Ovary (tissue), 10 donors: ENCODE measurements at regions of chr1 and their contacts with region 1.

Region 1: GRCh38 chr1:162696286-162696862 is 64.1 kb downstream of the DDR2 start:
- DNase-seq: peak; percentile 87 to 92 (median 89)
- H3K4me3 ChIP-seq: no peak overlapping the region
- H3K27ac ChIP-seq: peak overlapping the region; percentile 67 to 87
- H3K4me1 ChIP-seq: peaks cover 36% of the 10 kb centered on the region
- H3K27me3 ChIP-seq: no peaks in the 10 kb centered on the region
- CTCF ChIP-seq: no peak
- EP300 ChIP-seq: peak; percentile 49
- POLR2A ChIP-seq: peak; percentile 18

Region 2: DNA sequence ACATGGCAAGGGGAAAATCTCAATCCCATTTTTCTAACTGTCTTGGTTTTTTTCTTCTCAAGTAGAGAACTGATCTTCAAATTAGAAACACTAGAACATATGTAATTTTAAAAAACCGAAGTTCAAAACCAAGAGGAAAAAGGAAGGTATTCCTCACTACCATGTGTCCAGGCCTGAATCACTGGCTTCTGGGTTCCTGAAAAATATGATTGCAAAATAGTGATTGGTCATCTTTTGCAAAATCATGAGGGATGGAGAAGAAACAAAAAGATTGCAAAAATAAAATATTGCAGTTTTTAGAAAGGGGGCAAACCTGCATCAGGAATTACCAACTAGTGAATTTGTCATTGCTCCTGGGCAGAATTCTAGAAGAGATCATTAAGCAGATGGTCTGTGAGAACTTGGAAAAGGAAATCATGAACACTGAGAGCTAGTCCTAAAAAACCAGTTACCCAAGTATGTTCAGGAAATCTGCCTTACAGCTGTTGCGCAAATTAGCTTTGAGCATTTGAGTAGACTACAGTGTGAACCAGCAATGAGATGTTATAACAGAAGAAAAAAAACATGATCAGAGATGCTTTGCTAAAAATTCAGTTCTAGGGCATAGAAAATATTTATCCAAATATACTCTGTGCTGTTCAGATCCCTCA is 369.1 kb before region 1 on chr1:
- intact Hi-C with region 1: no loop called
- DNase-seq: no peak
- H3K4me3 ChIP-seq: no peak overlapping the region
- H3K27ac ChIP-seq: no peak overlapping the region
- H3K4me1 ChIP-seq: no peaks in the 10 kb centered on the region
- H3K27me3 ChIP-seq: no peaks in the 10 kb centered on the region
- CTCF ChIP-seq: no peak
- EP300 ChIP-seq: no peak
- POLR2A ChIP-seq: no peak

Region 3: DNA sequence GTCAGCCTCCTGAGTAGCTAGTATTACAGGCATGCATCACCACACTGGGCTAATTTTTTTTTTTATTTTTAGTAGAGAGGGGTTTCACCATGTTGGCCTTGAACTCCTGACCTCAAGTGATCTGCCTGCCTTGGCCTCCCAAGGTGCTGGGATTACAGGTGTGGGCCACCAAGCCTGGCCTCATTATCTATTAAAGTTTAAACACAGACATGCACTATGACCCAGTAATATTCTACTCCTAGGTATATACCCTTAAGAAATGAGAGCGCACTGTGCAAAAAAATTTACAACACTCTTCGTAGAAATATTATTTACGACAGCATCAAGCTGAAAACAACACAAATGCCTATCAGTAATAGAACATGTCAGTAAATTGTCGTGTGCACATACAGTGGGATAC is 265.8 kb before region 1 on chr1:
- intact Hi-C with region 1: no loop called
- DNase-seq: no peak
- H3K4me3 ChIP-seq: no peak overlapping the region
- H3K27ac ChIP-seq: no peak overlapping the region
- H3K4me1 ChIP-seq: no peaks in the 10 kb centered on the region
- H3K27me3 ChIP-seq: no peaks in the 10 kb centered on the region
- CTCF ChIP-seq: no peak
- EP300 ChIP-seq: no peak
- POLR2A ChIP-seq: no peak

Region 4: GRCh38 chr1:162633081-162633762 is 63.2 kb before region 1 on chr1:
- intact Hi-C with region 1: loop called in 1 of 4 experiments (anchors 10 kb)
- DNase-seq: peak in 4 of 5 donors; percentile 39 to 55 (median 44)
- H3K4me3 ChIP-seq: peak overlapping the region; percentile 44
- H3K27ac ChIP-seq: peak overlapping the region; percentile 76 to 92
- H3K4me1 ChIP-seq: peaks cover 18% of the 10 kb centered on the region
- H3K27me3 ChIP-seq: no peaks in the 10 kb centered on the region
- CTCF ChIP-seq: no peak
- EP300 ChIP-seq: no peak
- POLR2A ChIP-seq: no peak